ENCODE measurements at regions of chr16 and their contacts with region 1.

Region 1: DNA sequence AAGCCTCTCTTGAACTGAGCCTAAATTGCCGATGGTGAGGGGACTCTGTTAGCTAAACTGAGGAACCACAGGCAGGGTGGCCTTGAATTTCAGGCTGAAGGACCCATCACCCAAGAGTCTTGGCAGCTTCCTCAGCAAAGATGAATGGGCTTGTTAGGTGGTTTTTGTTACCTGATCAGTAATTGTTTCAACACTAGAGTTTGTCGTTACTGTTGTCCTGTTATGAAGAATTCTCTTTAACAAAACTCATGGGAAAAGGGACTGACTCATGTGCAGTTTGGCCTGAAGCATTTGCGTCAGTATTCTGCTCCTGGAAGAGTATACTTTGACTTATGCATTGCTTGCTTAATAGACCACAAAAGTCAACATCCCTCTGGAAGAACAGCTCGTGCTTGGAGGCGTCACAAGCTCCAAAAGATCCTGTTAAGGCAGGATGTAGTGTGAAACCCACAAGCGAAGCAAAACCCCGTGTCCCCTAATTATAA is 206.0 kb downstream of the IRX3 start:
- DNase-seq: peak; percentile 99
- H3K4me3 ChIP-seq: no peak overlapping the region
- H3K27ac ChIP-seq: peak overlapping the region; percentile 84
- H3K4me1 ChIP-seq: peaks cover 28% of the 10 kb centered on the region
- H3K27me3 ChIP-seq: no peaks in the 10 kb centered on the region
- CTCF ChIP-seq: no peak

Region 2: GRCh38 chr16:53892155-53892554 is 188.4 kb before region 1 on chr16:
- CTCF ChIA-PET with region 1: no interaction called
- dilution Hi-C with region 1: no loop called
- in situ Hi-C with region 1: no loop called
- intact Hi-C with region 1: loop called (anchors 5 kb)
- DNase-seq: peak; percentile 51
- H3K4me3 ChIP-seq: no peak overlapping the region
- H3K27ac ChIP-seq: peak overlapping the region; percentile 5
- H3K4me1 ChIP-seq: peaks cover 26% of the 10 kb centered on the region
- H3K27me3 ChIP-seq: no peaks in the 10 kb centered on the region
- CTCF ChIP-seq: peak; percentile 53 to 69

Region 3: DNA sequence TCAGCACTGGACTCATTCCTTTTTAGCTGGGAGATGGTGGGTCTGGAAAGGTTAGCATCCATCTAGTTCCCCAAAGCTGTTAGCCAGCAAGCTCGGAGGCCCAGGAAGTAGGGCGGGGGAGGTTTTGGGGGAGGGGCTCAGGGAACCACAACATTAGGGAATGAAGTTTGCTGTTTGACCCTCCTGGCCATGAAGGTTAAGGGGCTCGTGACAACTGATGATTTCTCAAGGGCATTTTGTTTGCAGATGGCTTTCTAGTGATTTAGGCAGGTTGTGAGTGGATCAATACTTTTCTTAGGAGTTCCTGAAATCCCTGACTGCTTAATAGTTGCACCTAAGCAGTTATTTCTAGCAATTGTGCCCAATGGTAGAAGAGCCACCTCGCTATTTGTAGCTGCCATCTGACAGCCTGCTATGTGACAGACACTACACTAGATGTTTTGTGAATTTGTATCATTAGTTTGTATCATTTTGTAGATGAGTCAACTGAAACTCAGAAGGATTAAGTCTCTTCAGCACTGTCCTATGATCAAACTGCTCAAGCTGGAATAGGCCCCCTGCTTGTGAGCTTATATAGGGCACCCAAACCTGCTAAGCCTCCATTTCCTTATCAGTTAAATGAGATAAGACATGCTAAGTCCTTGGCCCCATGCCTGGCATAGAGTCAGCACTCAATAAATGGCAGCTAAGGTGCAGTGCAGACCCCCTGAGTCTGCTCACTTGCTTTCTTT is 59.7 kb after region 1 on chr16:
- CTCF ChIA-PET with region 1: no interaction called
- dilution Hi-C with region 1: no loop called
- in situ Hi-C with region 1: no loop called
- intact Hi-C with region 1: no loop called
- DNase-seq: no peak
- H3K4me3 ChIP-seq: no peak overlapping the region
- H3K27ac ChIP-seq: no peak overlapping the region
- H3K4me1 ChIP-seq: peaks cover 7% of the 10 kb centered on the region
- H3K27me3 ChIP-seq: no peaks in the 10 kb centered on the region
- CTCF ChIP-seq: no peak

Region 4: GRCh38 chr16:54171626-54172525 is 91.3 kb after region 1 on chr16:
- CTCF ChIA-PET with region 1: no interaction called
- dilution Hi-C with region 1: loop called (anchors 5 kb)
- in situ Hi-C with region 1: no loop called
- intact Hi-C with region 1: no loop called
- DNase-seq: peak; percentile 29
- H3K4me3 ChIP-seq: no peak overlapping the region
- H3K27ac ChIP-seq: no peak overlapping the region
- H3K4me1 ChIP-seq: no peaks in the 10 kb centered on the region
- H3K27me3 ChIP-seq: no peaks in the 10 kb centered on the region
- CTCF ChIP-seq: no peak